PC-9 (cell line): ENCODE measurements at regions of chr1 and their contacts with region 1.

Region 1: GRCh38 chr1:77825131-77825709 is 45.8 kb downstream of the MIGA1 start:
- DNase-seq: peak in 1 of 2 experiments; percentile 57
- H3K4me3 ChIP-seq: no peak overlapping the region
- H3K27ac ChIP-seq: no peak overlapping the region
- H3K4me1 ChIP-seq: peaks cover 17% of the 10 kb centered on the region
- H3K27me3 ChIP-seq: no peaks in the 10 kb centered on the region
- CTCF ChIP-seq: no peak; the same call in 1 of the 2 replicates

Region 2: DNA sequence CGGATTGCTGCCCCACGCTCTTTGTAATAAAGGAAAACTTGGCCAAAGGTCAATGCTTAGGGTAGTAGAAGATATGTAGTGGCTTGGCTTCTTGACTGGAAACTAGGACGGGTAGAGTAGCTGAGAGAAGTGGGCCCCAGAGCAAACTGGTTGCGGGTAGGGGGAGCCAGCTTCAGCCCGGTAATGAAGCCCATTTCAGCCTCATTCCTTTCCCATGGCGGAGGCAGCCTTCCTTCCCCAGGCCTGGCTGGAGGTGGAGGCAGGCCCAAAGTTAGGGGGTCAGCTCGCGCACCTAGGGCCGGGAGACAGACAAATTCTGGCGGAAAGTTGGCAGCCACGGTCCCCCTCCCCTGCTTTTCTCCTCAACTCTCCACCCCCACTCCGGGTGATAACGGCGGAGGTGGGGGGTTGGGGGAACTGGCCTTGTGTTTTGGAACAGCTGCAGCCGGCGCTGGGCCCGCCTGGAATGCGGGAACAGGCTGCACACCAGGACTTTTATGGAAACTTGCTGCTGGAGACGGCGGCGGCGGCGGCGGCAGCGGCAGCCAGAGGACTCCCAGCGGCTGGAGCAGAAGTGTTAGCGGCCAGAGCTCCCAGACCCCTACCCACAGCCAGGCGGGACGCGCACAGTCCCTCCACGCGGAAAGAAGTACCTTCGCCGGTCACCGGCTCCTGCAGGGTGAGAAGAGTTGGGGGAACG is 63.0 kb after region 1 on chr1 and contains the start of gene NEXN:
- CTCF ChIA-PET with region 1: interaction called, 14 read pairs
- POLR2A ChIA-PET with region 1: no interaction called
- intact Hi-C with region 1: no loop called
- DNase-seq: peak; percentile 39 to 41
- H3K4me3 ChIP-seq: peak within 1 kb of the TSS; percentile 82
- H3K27ac ChIP-seq: peak within 1 kb of the TSS; percentile 60
- H3K4me1 ChIP-seq: peaks cover 20% of the 10 kb centered on the region
- H3K27me3 ChIP-seq: no peaks in the 10 kb centered on the region
- CTCF ChIP-seq: no peak
- total RNA-seq, gene NEXN: 0.92 and 1.2 TPM in 2 replicates

Region 3: GRCh38 chr1:78114034-78114956 is 289.1 kb after region 1 on chr1:
- CTCF ChIA-PET with region 1: interaction called, 3 read pairs
- POLR2A ChIA-PET with region 1: no interaction called
- intact Hi-C with region 1: loop called (anchors 5 kb)
- DNase-seq: peak; percentile 64 to 72
- H3K4me3 ChIP-seq: no peak overlapping the region
- H3K27ac ChIP-seq: no peak overlapping the region
- H3K4me1 ChIP-seq: no peaks in the 10 kb centered on the region
- H3K27me3 ChIP-seq: no peaks in the 10 kb centered on the region
- CTCF ChIP-seq: peak; percentile 92